Head of caudate nucleus (tissue), 42 donors: ENCODE measurements at regions of chr7 and their contacts with region 1.

Region 1: DNA sequence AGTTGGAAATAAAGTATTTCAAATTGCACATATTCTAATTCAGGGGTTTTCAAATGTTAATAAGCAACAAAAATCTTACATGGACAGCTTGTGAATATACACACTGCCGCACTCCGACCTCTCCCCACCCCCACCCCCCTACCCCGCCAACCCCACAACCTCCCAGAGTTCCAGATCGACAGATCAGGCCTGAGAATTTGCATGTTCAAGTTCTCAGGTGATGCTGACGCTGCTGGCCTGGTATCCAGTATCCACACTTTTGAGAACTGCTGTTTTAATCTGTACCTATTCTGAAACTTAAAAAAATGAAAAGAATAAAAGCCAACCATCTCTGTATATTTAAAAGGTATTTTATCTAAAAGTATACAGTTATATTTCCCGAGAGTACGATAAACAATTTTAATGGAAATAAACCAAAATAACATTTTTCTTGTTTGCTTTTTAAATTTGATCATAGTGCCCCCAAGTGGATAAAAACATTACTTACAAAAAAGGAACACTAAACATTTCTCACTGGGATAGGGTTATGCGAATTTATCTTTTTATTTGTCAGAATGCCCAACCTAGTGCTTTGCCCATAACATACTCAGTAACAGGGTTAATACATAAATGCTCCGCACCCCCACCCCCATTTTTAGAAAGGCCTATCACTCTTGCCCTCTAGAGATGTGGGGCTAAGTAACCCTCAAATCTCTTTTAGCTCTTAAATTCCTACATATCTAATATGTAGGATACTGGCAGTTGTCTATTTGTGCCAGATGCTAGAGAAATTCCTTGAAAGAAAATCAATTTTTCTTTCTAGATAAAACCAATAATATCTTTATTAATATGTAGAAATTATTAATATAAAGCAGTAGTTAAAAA is 166.3 kb downstream of the RNF133 start:
- DNase-seq: peak in 1 of 42 donors; percentile 2

Region 2: DNA sequence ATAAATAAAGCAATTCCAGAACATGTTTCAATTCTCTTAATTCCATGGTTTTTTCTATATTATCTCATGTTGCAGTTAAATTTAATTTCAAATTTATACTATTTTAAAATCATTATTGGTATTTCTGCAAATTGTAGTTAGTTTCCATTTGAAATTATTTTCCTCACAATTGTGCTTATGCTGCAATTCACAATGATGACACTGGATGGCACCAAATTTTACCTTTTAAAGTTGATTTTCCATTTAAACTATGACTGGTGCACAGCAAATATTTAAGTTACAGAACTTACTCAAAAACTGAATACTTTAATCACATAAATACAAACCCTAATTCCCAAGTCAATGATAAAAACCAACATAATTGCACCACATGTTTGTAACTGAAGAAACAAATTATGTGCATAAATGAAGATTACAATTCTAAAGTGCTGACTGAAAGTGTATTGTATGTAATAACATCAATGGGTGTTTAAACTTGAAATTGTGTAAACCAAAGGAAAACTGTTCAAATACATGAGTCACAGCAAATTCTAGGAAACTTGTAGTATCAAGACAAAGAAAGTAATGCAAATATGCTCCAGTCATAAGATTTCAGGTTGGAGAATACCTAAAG is 313.3 kb before region 1 on chr7:
- intact Hi-C with region 1: loop called (anchors 5 kb)
- DNase-seq: peak in 3 of 42 donors; percentile 4 to 46 (median 5)

Region 3: GRCh38 chr7:123154231-123154860 is 621.7 kb after region 1 on chr7:
- intact Hi-C with region 1: no loop called
- DNase-seq: peak; percentile 10 to 91 (median 76)